ENCODE measurements at regions of chr7 and their contacts with region 1.

Region 1: DNA sequence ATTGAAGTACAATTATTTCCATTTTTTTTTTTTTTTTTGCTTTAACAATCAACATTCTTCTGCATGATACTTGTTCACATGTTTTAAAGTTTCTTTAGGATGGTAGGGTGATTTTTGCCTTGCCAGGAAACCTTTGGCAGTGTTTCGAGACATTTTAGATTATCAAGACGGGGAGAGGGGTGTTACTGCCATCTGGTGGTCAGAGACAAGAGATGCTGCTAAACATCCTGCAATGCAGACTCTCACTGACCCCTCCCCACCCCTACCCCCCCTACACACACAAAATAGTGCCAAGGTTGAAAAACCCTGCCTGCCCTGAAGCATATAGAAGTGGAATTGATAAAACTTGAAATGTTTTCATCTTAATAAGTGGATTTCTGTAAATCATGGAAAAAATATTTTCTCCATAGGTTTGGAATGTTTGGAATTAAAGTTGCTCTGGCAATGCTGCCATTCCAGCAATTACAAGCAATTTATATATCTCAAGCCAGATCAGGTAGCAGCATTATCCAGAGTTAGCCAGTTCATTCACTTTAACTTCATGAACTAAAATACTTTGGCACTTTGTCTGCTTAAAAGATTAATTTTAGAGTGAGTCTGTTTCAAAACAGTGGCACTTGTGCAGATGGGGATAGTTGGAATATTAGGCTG is 62.1 kb downstream of the SDHAF3 start:
- DNase-seq: peak in 4 of 5 donors; percentile 26 to 30 (median 28)
- ATAC-seq: peak in 2 of 4 donors; percentile 52 to 59
- H3K4me3 ChIP-seq: no peak overlapping the region
- H3K27ac ChIP-seq: no peak overlapping the region
- H3K4me1 ChIP-seq: peaks cover 0 to 3% (median 0%) of the 10 kb centered on the region in 12 donors
- H3K27me3 ChIP-seq: no peaks in the 10 kb centered on the region
- CTCF ChIP-seq: peak; percentile 66 to 88 (median 75)
- POLR2A ChIP-seq: no peak

Region 2: GRCh38 chr7:96747418-96747940 is 432.1 kb before region 1 on chr7:
- intact Hi-C with region 1: no loop called
- DNase-seq: no peak
- ATAC-seq: no peak
- H3K4me3 ChIP-seq: no peak overlapping the region
- H3K27ac ChIP-seq: no peak overlapping the region
- H3K4me1 ChIP-seq: no peaks in the 10 kb centered on the region
- H3K27me3 ChIP-seq: peaks cover 0 to 5% (median 0%) of the 10 kb centered on the region in 9 donors
- CTCF ChIP-seq: no peak
- POLR2A ChIP-seq: no peak

Region 3: DNA sequence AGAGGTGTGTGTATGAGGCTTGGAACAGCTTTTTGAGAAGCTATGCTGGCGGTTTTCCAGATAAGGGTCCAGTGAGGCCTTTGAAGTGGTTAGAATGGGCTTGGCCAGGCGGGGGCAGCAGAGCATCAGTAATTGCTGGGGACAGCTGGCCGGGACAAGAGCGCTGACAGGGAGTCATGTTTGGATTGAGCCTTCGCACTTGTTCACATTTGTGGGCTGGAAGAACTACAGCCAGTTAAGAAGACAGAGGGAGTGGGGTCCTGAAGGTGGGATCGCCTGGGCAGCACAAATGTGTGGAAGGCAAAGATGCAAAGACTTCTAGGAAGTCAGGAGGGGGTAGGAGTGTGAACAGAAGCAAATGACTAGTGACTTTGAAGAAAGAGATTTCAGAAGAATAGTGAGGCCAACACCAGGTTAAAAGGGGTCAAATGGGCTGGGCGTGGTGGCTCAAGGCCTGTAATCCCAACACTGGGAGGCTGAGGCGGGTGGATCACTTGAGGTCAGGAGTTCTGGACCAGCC is 74.8 kb before region 1 on chr7:
- intact Hi-C with region 1: loop called (anchors 1 to 2 kb)
- DNase-seq: peak; percentile 80 to 90 (median 83)
- ATAC-seq: peak; percentile 86 to 96 (median 96)
- H3K4me3 ChIP-seq: no peak overlapping the region
- H3K27ac ChIP-seq: no peak overlapping the region
- H3K4me1 ChIP-seq: peaks cover 0 to 7% (median 0%) of the 10 kb centered on the region in 12 donors
- H3K27me3 ChIP-seq: peaks cover 0 to 6% (median 0%) of the 10 kb centered on the region in 9 donors
- CTCF ChIP-seq: peak; percentile 69 to 88 (median 82)
- POLR2A ChIP-seq: no peak